Activated naive CD4-positive, alpha-beta T cell treated with anti-CD3 and anti-CD28 coated beads for 36 hours (primary cell): ENCODE measurements at regions of chr1 and their contacts with region 1.

Region 1: GRCh38 chr1:74763807-74764206 is 30.9 kb downstream of the TYW3 start:
- DNase-seq: no peak
- H3K4me3 Mint-ChIP-seq: no peak overlapping the region
- H3K27ac Mint-ChIP-seq: peak overlapping the region; percentile 47
- H3K4me1 Mint-ChIP-seq: peaks cover 18% of the 10 kb centered on the region
- H3K27me3 Mint-ChIP-seq: no peaks in the 10 kb centered on the region

Region 2: GRCh38 chr1:73755649-73756048 is 1008.2 kb before region 1 on chr1:
- CTCF ChIA-PET with region 1: no interaction called
- intact Hi-C with region 1: no loop called
- DNase-seq: no peak
- H3K4me3 Mint-ChIP-seq: no peak overlapping the region
- H3K27ac Mint-ChIP-seq: no peak overlapping the region
- H3K4me1 Mint-ChIP-seq: no peaks in the 10 kb centered on the region
- H3K27me3 Mint-ChIP-seq: no peaks in the 10 kb centered on the region

Region 3: DNA sequence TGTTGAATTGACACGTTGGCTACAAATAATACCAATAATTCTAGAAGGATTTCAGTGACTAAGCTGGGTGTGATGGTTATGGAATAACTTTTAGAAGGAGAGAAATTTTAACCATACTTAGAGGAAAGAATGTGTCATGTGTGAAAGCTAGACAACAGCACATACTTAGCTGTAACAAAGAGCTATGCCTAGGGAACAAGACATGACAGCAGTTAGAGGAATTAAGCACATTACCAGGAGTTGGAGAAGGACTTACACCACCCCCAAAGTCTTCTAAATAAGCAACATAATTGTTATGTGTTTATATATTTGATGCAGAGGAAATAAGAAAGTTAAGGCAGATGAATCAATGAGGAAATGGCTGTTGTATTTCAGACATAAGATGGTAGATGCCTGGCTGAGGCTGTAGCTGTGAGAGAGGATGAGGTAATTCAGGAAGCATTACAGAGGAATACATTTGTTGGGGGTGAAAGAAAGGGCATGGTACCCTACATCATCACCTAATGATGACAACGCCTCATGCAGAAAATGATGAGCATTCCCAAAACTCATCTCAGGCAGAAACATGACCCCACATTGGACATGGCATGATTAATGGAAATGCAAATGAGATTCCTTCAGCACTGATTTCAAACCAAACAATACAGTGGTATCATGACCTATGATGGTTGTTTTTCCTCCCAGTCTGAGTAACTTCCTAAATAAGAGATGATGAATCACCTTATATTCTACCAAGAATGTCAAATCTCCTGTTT is 581.9 kb after region 1 on chr1:
- CTCF ChIA-PET with region 1: no interaction called
- intact Hi-C with region 1: loop called (anchors 5 kb)
- DNase-seq: no peak
- H3K4me3 Mint-ChIP-seq: no peak overlapping the region
- H3K27ac Mint-ChIP-seq: peak overlapping the region; percentile 58
- H3K4me1 Mint-ChIP-seq: peaks cover 6% of the 10 kb centered on the region
- H3K27me3 Mint-ChIP-seq: no peaks in the 10 kb centered on the region